ENCODE measurements at regions of chr12 and their contacts with region 1.

Region 1: DNA sequence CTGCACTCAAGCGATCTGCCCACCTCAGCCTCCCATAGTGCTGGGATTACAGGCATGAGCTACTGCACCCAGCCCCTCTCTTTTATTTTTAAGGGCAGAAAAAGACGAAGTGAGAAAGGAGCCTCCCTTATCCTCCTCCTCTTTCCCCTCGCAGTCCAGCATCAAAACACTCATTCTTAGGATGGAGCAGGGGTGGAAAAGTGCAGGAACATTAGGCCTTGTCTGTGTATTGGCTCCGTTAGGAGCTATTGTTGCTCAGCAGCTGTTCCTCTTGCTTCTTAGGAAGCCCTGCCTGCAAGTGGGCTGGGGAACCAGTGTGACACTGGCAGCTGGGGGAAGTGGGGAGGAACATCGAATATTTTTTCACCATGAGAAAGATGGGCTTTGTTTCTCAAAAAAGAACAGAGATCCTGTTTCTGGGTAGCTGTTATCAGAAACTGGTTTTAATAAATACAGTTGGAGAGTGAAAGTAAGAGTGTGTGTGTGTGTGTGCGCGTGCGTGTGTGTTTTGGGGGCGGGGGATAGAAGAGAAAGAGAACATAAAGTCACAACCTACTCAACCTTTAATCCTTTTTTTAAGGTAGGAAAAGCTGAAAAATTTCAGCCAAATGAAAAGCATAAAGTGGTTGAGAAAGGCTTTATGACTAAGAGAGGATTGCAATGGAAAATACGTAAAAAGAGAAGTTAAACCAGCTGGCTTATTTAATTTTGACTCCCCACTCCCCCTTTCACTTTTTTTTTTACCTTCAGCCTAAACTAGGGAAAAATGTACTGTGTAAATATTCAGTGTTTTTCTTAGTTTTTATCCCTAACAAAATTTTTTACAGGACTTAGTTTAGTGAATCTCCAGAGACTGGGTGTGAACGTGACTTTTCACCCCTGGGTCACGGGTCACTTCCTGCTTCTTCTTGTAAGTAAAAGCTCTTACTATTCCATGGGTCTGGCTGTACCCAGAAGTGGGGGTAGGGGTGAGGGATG is 197.2 kb upstream of the PLEKHG7 start:
- DNase-seq: peak; percentile 33
- CTCF ChIP-seq: no peak

Region 2: DNA sequence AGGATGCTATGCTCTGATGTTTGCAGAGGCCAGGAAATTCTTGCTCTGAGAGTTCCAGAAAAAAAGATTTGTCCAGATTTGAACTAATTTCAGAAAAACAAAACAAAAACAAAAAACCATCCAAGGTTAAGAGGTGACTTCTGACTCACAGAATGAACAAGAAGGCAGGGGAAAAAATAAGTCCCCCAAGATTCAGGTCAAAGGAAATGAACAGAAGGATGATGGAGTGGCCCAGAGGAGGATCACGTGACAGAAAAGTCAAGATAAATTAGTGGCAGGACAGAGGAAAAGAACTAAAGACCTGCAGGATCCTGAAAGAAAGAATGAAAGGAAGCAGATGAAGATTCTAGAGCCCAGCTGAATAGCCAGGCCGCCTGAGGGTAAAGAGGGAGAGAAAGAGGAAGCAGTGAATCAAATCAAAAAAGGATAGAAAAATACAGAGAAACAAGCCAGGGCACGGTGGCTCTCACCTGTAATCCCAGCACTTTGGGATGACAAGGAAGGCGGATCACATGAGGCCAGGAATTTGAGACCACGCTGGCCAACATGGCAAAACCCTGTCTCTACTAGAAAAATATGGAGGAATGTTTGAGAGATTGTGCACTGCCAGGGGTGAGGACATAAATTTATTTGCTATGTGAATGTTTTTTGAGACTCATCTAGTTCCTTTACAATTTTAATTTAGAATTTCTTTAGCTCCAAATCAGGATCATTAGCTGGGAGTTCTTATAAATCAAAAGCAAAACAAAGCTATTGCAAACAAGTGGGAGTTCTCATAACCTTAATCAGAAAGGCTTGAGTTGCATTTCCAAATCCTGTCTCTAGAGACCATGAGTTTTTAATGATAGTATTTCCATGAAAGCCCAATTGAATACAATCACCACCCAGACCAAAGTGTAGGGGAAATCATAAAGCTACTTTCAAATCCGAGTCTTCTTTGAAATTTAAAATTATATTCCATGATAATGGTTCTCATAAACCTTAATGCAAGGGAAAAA is 19.9 kb before region 1 on chr12:
- CTCF ChIA-PET with region 1: interaction called, 35 read pairs
- POLR2A ChIA-PET with region 1: no interaction called
- DNase-seq: no peak
- CTCF ChIP-seq: no peak

Region 3: DNA sequence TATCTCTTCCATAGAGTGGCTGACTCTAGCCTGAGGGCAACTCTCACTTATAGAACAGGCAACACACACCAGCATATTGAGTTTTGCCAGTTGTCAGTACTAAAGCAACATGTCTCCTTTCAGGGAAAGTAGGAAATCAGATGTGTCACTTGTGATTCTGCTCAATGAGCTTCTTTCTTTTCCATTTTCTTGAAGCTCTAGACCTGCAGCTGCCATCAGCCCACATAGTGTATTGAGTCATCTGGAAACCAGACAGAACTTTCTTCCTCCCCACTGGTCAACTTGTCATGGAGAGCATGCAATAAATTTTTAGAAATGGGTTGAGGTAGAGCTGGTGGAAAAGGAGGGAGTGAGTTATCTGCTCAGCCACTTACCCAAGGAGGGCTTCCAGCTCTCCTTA is 11.7 kb before region 1 on chr12:
- CTCF ChIA-PET with region 1: interaction called, 65 read pairs
- POLR2A ChIA-PET with region 1: interaction called, 12 read pairs
- DNase-seq: peak; percentile 28
- CTCF ChIP-seq: no peak

Region 4: GRCh38 chr12:92516277-92516600 is 10.7 kb after region 1 on chr12:
- CTCF ChIA-PET with region 1: interaction called, 38 read pairs
- POLR2A ChIA-PET with region 1: no interaction called
- DNase-seq: no peak
- CTCF ChIP-seq: no peak

Region 5: DNA sequence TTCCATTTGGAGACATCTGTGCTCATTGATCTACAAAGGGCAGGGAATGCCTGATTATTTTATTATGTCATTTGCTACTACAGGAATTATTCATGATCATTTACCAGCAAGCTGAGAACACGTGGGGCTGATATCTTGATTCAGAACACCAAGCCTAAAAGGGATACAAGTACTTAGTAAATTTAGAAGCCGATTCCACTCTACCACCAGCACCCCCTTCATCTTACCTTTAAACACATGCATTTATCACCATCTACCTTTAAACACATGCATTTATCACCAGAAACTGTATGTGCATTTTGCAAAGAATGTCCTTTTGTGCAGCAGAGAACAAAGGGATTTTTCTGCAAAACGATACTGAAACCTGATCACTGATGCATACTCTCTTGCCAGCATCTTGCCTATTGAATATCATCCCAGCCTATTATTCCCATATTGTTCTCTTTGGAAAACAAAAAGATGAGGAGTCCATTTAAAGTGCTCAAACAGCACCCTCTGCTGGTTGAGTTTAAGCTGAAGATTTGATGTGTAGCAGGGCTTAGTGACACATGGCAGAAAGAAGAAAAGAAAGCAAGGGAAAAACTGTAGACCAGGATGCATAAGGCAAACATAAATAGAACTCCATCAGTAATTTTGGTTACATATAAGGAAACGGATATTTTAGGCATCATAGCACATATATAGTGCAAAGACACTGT is 64.7 kb after region 1 on chr12:
- CTCF ChIA-PET with region 1: interaction called, 50 read pairs
- POLR2A ChIA-PET with region 1: no interaction called
- DNase-seq: peak; percentile 47
- CTCF ChIP-seq: peak; percentile 73

Region 6: GRCh38 chr12:92608151-92609091 is 102.9 kb after region 1 on chr12:
- CTCF ChIA-PET with region 1: no interaction called
- POLR2A ChIA-PET with region 1: no interaction called
- DNase-seq: no peak
- CTCF ChIP-seq: peak; percentile 50

Region 7: DNA sequence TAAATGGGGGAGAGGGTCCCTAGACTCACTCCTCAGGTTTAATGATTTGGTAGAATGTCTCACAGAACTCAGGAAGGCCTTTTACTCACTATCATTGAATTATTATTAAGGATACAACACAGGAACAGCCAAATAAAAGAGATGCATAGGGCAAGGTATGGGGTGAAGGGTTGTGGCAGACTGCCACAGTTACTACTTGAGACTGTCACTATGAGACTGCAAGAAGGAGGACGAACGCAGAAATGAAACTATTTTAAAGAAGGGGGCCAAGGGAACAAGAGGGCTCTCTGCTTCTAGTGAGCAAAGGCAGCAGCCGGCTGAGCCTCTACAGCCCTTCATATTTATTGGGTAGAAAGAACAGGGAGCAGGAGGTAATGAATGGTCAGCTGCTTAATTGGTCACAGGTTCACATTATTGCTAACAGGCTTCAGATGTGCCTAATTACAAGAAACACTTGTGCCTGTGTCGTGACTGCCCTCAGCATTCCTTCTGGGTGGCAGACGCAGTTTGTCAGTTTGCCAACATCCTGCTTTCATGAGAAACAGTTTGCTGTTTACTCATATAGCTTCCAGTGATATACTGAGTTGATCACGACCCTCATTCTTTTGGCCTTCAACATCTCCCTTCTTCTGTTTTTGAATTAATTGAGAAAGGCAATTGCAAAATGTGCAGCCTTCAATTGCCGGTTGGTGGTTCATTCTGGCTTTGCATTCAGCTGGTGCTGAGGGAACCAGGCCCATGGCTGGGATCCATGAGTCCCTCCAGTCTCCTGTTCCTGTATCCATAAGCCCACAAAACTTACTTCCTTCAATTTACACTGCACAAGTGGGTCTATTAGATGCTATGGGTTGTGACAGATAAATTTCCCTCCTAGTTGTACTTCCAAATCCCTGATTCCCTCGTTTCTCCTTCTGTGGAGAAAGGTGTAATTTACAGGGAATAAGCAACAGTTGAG is 114.5 kb after region 1 on chr12:
- CTCF ChIA-PET with region 1: no interaction called
- POLR2A ChIA-PET with region 1: no interaction called
- DNase-seq: no peak
- CTCF ChIP-seq: no peak